ENCODE measurements at regions of chr6 and their contacts with region 1.

Region 1: DNA sequence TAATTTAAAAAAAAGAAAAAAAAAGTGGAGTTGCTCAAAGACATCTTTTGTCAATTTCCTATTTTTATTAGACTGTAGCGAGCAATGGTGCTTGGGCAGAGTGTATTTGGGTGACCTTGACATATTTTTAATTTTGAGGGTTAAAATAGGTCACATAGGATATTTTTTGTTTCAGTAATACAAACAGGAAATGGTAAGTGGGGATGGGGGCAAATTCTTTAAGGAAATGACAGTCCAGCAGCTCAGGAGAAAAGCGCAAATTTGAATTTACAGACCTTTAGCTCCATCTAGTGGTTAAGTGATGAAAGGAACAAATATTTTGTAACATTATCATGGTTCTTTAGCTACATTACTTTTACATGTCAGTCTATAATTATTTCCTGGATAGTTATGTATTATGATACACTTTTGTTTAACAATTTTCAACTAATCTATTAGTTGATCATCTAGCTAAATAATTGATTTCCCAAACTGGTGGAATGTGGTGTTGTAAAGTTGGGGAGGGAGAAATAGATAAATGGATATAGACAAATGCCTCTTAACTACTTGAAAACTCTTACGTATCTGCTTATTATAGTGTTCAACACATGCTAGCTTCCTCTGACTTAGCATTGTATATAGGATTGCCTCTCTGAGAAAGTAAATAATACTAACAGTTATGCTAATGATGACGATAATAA is 10.0 kb downstream of the CITED2 start:
- DNase-seq: no peak
- H3K4me3 ChIP-seq: no peak overlapping the region
- H3K27ac ChIP-seq: no peak overlapping the region
- H3K4me1 ChIP-seq: peaks cover 7 to 22% (median 9%) of the 10 kb centered on the region in 4 donors
- H3K27me3 ChIP-seq: no peaks in the 10 kb centered on the region
- CTCF ChIP-seq: peak; percentile 69 to 83 (median 79)
- EP300 ChIP-seq: no peak
- POLR2A ChIP-seq: no peak

Region 2: GRCh38 chr6:139134817-139135581 is 229.4 kb before region 1 on chr6 and contains the start of gene HECA:
- intact Hi-C with region 1: loop called (anchors 10 kb)
- DNase-seq: peak; percentile 99
- H3K4me3 ChIP-seq: peak within 1 kb of the TSS; percentile 93 to 97 (median 94)
- H3K27ac ChIP-seq: peak within 1 kb of the TSS; percentile 97 to 98 (median 98)
- H3K4me1 ChIP-seq: peaks cover 23 to 56% (median 45%) of the 10 kb centered on the region in 4 donors
- H3K27me3 ChIP-seq: no peaks in the 10 kb centered on the region
- CTCF ChIP-seq: no peak
- EP300 ChIP-seq: no peak
- POLR2A ChIP-seq: peak; percentile 31
- total RNA-seq, gene HECA: 43.2 to 68.4 (median 52.4) TPM

Region 3: GRCh38 chr6:139219746-139220145 is 144.7 kb before region 1 on chr6:
- intact Hi-C with region 1: loop called (anchors 2 kb)
- DNase-seq: no peak
- H3K4me3 ChIP-seq: no peak overlapping the region
- H3K27ac ChIP-seq: peak overlapping the region in 2 of 4 donors; percentile 11 to 30
- H3K4me1 ChIP-seq: peaks cover 0 to 10% (median 8%) of the 10 kb centered on the region in 4 donors
- H3K27me3 ChIP-seq: no peaks in the 10 kb centered on the region
- CTCF ChIP-seq: no peak
- EP300 ChIP-seq: no peak
- POLR2A ChIP-seq: no peak

Region 4: DNA sequence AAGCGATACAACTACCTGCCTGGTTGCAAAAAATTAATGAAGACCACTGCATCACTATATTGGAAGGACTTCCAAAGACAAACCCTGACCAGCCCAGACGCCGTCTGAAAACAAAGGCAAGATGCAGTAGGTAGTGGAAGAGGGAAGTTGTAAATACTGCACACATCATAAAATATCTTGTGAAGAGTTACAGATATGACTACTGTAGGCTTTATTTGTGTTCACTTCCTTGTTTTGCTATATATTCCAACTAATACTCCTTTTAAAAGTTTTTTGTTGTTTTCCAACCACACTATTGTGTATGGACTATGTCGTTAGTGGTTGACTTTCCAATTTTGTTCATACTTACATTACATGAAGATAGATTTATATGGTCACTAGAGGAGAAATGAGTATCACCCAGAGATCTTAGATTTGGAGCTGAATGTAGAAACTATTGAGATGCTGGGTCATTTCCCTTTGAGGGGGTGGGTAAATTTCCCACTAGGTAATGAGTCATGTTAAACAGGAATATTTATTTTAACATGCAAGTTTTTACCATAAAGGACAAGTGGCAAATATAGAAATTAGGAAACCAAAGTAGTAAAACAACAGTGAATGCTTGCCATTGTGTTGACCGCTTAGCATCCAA is 56.0 kb before region 1 on chr6:
- intact Hi-C with region 1: no loop called
- DNase-seq: no peak
- H3K4me3 ChIP-seq: no peak overlapping the region
- H3K27ac ChIP-seq: no peak overlapping the region
- H3K4me1 ChIP-seq: peaks cover 0 to 11% (median 0%) of the 10 kb centered on the region in 4 donors
- H3K27me3 ChIP-seq: no peaks in the 10 kb centered on the region
- CTCF ChIP-seq: no peak
- EP300 ChIP-seq: no peak
- POLR2A ChIP-seq: no peak

Region 5: DNA sequence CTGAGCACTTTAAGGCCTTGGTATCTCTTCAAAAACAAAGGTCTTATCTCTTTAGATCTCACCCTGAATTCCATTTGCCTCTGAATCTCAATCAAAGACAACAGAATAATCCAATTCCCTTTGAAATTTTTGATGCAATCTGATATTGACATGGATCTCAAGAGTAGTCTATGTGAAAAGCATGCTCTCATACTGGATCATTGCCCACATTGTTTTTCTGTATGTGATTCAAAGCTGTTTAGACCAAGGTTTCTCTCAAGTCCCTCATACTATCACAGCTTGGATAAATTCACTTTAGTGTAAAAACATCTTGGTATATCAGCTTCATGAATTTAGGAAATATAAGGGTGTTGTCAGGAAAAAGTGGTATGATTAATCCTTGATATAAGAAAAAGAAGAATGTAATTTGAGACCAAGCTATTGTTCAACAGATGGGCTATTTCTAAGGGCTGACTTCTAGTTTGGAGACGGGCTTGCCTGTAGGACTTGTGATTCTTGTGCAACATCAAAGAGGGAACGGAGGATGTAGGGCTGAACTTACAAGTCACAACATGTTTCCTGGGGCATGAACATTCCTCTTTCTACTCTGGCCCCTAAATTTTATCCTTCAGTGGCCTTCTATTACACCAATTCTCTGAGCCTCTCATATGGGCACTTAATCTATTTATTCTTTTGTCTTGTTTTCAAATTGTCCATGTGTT is 87.9 kb after region 1 on chr6:
- intact Hi-C with region 1: no loop called
- DNase-seq: no peak
- H3K4me3 ChIP-seq: no peak overlapping the region
- H3K27ac ChIP-seq: no peak overlapping the region
- H3K4me1 ChIP-seq: no peaks in the 10 kb centered on the region
- H3K27me3 ChIP-seq: no peaks in the 10 kb centered on the region
- CTCF ChIP-seq: no peak
- EP300 ChIP-seq: no peak
- POLR2A ChIP-seq: no peak

Region 6: DNA sequence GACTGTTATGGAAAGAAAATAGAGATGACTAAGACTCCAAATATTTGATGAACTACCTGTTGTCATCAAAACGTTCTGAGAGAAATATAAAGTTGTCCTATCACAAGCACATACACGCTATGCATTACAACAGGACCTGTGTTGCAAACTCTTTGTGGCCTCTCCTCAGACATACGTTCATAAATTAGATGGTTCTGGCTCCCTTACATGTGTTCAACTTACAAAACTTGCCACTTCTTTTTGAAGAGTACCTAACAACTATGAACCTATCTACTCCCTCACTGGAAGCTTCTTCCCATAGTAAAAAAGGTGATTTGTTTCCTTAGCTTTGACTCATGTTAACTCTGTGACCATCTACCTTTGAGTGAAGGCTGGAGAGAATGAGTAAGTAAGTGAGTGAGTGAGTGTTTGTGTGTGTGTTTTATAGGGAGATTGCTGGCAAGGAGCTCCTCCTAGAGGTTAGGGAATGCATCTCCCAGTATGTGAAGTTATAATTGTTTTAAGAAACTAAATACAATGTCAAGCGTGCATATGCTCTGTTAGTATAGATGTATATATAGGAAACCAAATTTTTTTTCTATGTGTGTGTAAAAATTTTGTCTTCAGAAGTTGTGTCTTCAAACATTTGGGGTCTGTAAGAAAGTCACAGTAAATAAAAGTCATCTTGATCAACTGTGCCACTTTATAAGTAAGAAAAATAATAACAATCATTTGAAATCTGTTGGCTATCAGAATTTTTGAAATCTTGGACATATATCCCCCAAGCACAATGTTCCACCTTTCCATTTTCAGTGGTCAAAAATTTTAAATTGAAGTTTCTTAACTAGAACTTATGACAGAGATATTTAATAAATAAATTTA is 1557.2 kb after region 1 on chr6:
- intact Hi-C with region 1: loop called (anchors 10 kb)
- DNase-seq: no peak
- H3K4me3 ChIP-seq: no peak overlapping the region
- H3K27ac ChIP-seq: no peak overlapping the region
- H3K4me1 ChIP-seq: no peaks in the 10 kb centered on the region
- H3K27me3 ChIP-seq: no peaks in the 10 kb centered on the region
- CTCF ChIP-seq: peak; percentile 49 to 65 (median 53)
- EP300 ChIP-seq: no peak
- POLR2A ChIP-seq: no peak

Measured in esophagus muscularis mucosa (tissue), 4 donors.